ENCODE measurements at regions of chr1 and their contacts with region 1.

Region 1: DNA sequence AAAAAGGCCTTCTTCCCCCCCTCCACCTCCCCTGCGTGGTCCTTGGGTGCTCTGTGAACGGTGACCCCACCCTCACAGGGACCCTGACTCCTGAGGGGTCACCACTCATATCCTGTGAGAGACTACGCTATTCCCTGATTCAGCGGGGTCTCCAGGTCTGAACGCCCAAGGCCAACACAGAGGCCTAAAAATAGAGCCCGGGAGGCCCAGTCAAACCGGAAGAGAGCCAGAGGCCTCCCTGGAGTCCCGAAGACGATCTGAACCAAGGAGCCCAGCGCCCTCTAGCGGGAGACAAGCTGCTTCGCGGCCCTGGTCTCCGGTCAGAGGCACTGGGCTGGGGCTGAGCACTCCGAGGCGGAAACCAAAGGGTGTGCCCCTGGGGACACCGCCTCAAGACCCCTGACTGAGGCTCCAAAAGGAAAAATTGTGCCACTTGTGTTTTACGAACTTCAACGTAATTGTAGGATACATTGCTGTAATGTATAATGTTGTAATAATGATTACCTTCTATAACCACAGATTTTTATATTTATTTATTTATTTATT is 42.4 kb upstream of the PSEN2 start:
- DNase-seq: peak; percentile 97
- ATAC-seq: peak; percentile 100
- H3K4me3 Mint-ChIP-seq: peak overlapping the region; percentile 32
- H3K27ac Mint-ChIP-seq: peak overlapping the region; percentile 91
- H3K4me1 Mint-ChIP-seq: peaks cover 14% of the 10 kb centered on the region
- H3K27me3 Mint-ChIP-seq: peaks cover 3% of the 10 kb centered on the region

Region 2: GRCh38 chr1:226634166-226634588 is 193.9 kb before region 1 on chr1:
- CTCF ChIA-PET with region 1: interaction called, 71 read pairs
- POLR2A ChIA-PET with region 1: interaction called, 4 read pairs
- DNase-seq: peak; percentile 84
- ATAC-seq: peak; percentile 78
- H3K4me3 Mint-ChIP-seq: no peak overlapping the region
- H3K27ac Mint-ChIP-seq: peak overlapping the region; percentile 65
- H3K4me1 Mint-ChIP-seq: peaks cover 44% of the 10 kb centered on the region
- H3K27me3 Mint-ChIP-seq: no peaks in the 10 kb centered on the region

Region 3: GRCh38 chr1:226642876-226643576 is 185.0 kb before region 1 on chr1:
- CTCF ChIA-PET with region 1: interaction called, 15 read pairs
- POLR2A ChIA-PET with region 1: no interaction called
- DNase-seq: peak; percentile 58
- ATAC-seq: peak; percentile 73
- H3K4me3 Mint-ChIP-seq: peak overlapping the region; percentile 54
- H3K27ac Mint-ChIP-seq: peak overlapping the region; percentile 91
- H3K4me1 Mint-ChIP-seq: peaks cover 47% of the 10 kb centered on the region
- H3K27me3 Mint-ChIP-seq: no peaks in the 10 kb centered on the region

Region 4: GRCh38 chr1:226656601-226657277 is 171.3 kb before region 1 on chr1:
- CTCF ChIA-PET with region 1: interaction called, 17 read pairs
- POLR2A ChIA-PET with region 1: no interaction called
- DNase-seq: no peak
- ATAC-seq: no peak
- H3K4me3 Mint-ChIP-seq: no peak overlapping the region
- H3K27ac Mint-ChIP-seq: peak overlapping the region; percentile 97
- H3K4me1 Mint-ChIP-seq: peaks cover 28% of the 10 kb centered on the region
- H3K27me3 Mint-ChIP-seq: no peaks in the 10 kb centered on the region

Region 5: GRCh38 chr1:226736908-226737818 is 90.9 kb before region 1 on chr1:
- CTCF ChIA-PET with region 1: interaction called, 16 read pairs
- POLR2A ChIA-PET with region 1: interaction called, 5 read pairs
- DNase-seq: peak; percentile 69
- ATAC-seq: peak; percentile 43
- H3K4me3 Mint-ChIP-seq: peak overlapping the region; percentile 91
- H3K27ac Mint-ChIP-seq: peak overlapping the region; percentile 90
- H3K4me1 Mint-ChIP-seq: peaks cover 56% of the 10 kb centered on the region
- H3K27me3 Mint-ChIP-seq: no peaks in the 10 kb centered on the region

Measured in activated CD8-positive, alpha-beta T cell treated with anti-CD3 and anti-CD28 coated beads, Interleukin-2, amount 10 ng/mL, durations not matched to agents 7 days and 5 days (primary cell).